ENCODE measurements at regions of chr7 and their contacts with region 1.

Region 1: GRCh38 chr7:37495574-37496184 is 47.0 kb upstream of the ELMO1 start:
- DNase-seq: peak; percentile 50
- CTCF ChIP-seq: peak; percentile 48

Region 2: DNA sequence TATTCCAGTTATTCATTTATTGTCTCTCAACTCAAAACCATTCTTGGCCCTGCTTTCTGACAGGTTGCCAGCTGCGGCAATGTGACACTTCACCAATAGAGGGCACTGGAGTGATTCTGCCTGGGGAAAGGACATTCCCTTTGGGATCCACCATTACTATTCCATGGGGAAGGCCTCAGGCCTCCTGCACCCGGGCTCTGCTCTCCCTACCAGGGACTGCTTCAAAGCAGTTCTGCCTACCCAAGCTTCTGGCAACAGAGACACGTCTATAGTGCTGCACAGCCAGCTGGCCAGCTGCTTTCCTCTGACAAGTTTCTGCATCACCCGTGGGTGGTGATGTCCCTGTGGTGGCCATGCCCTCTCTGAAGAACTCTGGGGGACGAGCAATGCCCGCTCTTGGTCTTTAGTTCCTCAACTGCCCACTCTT is 210.9 kb before region 1 on chr7:
- CTCF ChIA-PET with region 1: interaction called, 19 read pairs
- POLR2A ChIA-PET with region 1: no interaction called
- DNase-seq: peak; percentile 52
- CTCF ChIP-seq: peak; percentile 88

Region 3: GRCh38 chr7:37467002-37467401 is 28.7 kb before region 1 on chr7:
- CTCF ChIA-PET with region 1: interaction called, 11 read pairs
- POLR2A ChIA-PET with region 1: no interaction called
- DNase-seq: peak; percentile 37
- CTCF ChIP-seq: no peak

Region 4: GRCh38 chr7:37476881-37477450 is 18.7 kb before region 1 on chr7:
- CTCF ChIA-PET with region 1: interaction called, 19 read pairs
- POLR2A ChIA-PET with region 1: no interaction called
- DNase-seq: no peak
- CTCF ChIP-seq: no peak

Region 5: GRCh38 chr7:37484426-37485073 is 11.1 kb before region 1 on chr7:
- CTCF ChIA-PET with region 1: interaction called, 17 read pairs
- POLR2A ChIA-PET with region 1: no interaction called
- DNase-seq: no peak
- CTCF ChIP-seq: no peak

Region 6: DNA sequence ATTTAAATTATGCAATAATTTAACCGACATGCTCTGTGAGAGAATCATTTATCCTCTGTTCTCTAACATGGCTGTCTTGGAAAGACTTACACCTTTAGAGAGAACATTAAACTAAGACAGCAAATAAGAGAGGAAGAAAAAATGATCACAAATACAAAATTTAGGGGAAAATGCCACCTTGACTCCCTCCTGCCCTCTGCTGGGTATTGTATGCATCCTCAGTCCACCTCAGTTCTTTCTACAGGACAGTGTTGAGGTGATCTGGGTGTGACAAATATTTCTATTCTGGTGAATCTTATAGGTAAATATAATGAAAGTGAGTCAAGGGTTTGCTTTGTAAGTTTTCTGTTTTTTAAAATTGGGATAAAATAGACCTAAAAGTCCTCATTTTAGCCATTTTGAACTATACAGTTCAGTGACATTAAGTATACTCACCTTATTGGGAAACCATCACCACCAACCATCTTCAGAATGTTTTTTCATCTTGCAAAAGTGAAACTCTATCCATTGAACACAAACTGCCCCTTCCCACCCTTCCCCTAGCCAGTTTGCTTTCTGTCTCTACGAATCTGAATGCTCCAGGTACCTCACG is 14.5 kb after region 1 on chr7:
- CTCF ChIA-PET with region 1: interaction called, 96 read pairs
- POLR2A ChIA-PET with region 1: no interaction called
- DNase-seq: peak; percentile 30
- CTCF ChIP-seq: peak; percentile 56

Region 7: DNA sequence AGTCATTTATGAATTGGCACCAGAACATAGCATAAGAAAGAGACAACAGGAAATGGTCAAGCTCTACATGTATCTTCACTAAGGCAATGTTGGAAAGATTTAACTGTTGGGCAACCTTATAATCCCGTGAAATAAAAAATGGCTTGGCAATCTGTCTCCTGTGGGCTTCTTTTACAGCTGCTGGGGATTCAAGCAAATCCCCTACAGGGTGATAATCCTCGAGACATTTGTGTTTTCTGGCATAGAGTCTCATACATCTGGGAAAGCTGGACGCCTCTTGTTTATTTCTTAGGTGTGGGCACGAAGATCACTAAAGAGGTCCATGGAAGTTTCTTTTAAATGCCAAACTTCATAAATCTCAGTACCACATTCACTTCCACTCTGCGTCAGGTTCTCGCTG is 105.6 kb after region 1 on chr7:
- CTCF ChIA-PET with region 1: no interaction called
- POLR2A ChIA-PET with region 1: no interaction called
- DNase-seq: no peak
- CTCF ChIP-seq: no peak